Mammary epithelial cell (primary cell): ENCODE measurements at regions of chr5 and their contacts with region 1.

Region 1: GRCh38 chr5:108521841-108522506 is 140.1 kb upstream of the FBXL17 start:
- DNase-seq: peak; percentile 48
- H3K4me3 ChIP-seq: no peak overlapping the region
- H3K27ac ChIP-seq: no peak overlapping the region
- H3K4me1 ChIP-seq: no peaks in the 10 kb centered on the region
- H3K27me3 ChIP-seq: peaks cover 3% of the 10 kb centered on the region
- CTCF ChIP-seq: peak; percentile 73 to 74

Region 2: GRCh38 chr5:108249095-108249784 is 272.7 kb before region 1 on chr5:
- CTCF ChIA-PET with region 1: no interaction called
- dilution Hi-C with region 1: no loop called
- in situ Hi-C with region 1: no loop called
- intact Hi-C with region 1: no loop called
- DNase-seq: no peak
- H3K4me3 ChIP-seq: no peak overlapping the region
- H3K27ac ChIP-seq: no peak overlapping the region
- H3K4me1 ChIP-seq: no peaks in the 10 kb centered on the region
- H3K27me3 ChIP-seq: no peaks in the 10 kb centered on the region
- CTCF ChIP-seq: no peak

Region 3: GRCh38 chr5:108579236-108579635 is 57.3 kb after region 1 on chr5:
- CTCF ChIA-PET with region 1: no interaction called
- dilution Hi-C with region 1: no loop called
- in situ Hi-C with region 1: no loop called
- intact Hi-C with region 1: no loop called
- DNase-seq: no peak
- H3K4me3 ChIP-seq: no peak overlapping the region
- H3K27ac ChIP-seq: no peak overlapping the region
- H3K4me1 ChIP-seq: no peaks in the 10 kb centered on the region
- H3K27me3 ChIP-seq: no peaks in the 10 kb centered on the region
- CTCF ChIP-seq: no peak

Region 4: GRCh38 chr5:108629779-108630528 is 108.0 kb after region 1 on chr5:
- CTCF ChIA-PET with region 1: no interaction called
- dilution Hi-C with region 1: no loop called
- in situ Hi-C with region 1: no loop called
- intact Hi-C with region 1: loop called (anchors 1 kb)
- DNase-seq: no peak
- H3K4me3 ChIP-seq: no peak overlapping the region
- H3K27ac ChIP-seq: no peak overlapping the region
- H3K4me1 ChIP-seq: no peaks in the 10 kb centered on the region
- H3K27me3 ChIP-seq: no peaks in the 10 kb centered on the region
- CTCF ChIP-seq: no peak

Region 5: DNA sequence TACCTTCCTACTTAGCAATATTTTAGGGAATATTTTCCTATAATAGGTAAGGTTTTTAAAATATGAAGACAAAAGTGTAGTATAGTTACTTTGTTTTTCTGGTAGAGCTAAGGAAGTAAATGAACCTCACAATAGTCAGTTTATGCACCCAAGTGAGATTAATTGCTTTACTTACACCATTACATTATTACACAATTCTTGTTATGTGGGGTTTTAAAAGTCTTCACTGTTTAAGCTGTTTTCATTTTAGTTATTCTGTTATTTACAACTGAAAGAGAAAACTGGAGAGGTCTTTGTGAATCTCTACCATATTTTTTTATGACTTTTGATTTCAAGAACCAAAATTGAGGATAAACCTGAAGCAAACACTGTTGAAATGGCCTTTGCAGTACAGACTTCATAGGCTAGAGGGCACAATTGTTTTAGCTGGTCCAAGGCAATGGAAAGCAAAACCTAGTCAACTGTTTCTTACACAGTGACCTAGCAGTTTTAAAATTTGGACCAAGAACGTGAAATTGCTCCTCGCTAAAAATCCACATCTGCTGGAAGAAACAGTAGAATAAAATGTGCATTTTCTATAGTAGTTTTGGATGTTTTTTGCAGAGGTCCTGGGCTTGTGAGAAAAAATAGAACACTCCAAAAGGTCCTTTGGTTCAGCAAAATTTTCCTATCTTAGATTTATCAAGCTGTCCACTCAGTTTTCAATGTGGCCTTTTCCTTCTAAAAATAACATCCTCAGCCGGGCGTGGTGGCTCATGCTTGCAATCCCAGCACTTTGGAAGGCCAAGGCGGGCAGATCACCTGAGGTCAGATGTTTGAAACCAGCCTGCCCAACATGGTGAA is 159.3 kb after region 1 on chr5:
- CTCF ChIA-PET with region 1: no interaction called
- dilution Hi-C with region 1: no loop called
- in situ Hi-C with region 1: no loop called
- intact Hi-C with region 1: loop called (anchors 1 kb)
- DNase-seq: peak; percentile 56
- H3K4me3 ChIP-seq: no peak overlapping the region
- H3K27ac ChIP-seq: no peak overlapping the region
- H3K4me1 ChIP-seq: no peaks in the 10 kb centered on the region
- H3K27me3 ChIP-seq: no peaks in the 10 kb centered on the region
- CTCF ChIP-seq: peak; percentile 72 to 87

Region 6: DNA sequence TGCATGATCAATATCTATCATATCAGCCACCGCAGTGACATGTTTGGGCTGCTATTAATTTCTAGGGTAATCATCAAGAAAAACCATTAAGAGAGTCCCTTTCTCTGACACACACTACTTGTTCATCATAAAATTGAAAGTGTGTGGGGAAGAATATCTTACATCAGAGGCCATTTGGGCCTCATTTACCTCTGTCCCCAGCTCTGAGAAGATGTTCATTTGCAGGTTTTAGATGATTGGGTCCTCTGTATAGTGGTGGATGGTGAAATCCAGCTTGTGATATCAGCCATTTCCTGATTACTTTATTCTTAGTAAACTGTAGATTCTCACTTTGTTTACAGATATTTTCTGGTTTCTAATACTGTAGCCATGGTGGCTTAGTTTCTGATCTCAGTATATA is 917.6 kb after region 1 on chr5:
- CTCF ChIA-PET with region 1: no interaction called
- dilution Hi-C with region 1: no loop called
- in situ Hi-C with region 1: no loop called
- intact Hi-C with region 1: loop called (anchors 10 kb)
- DNase-seq: no peak
- H3K4me3 ChIP-seq: no peak overlapping the region
- H3K27ac ChIP-seq: no peak overlapping the region
- H3K4me1 ChIP-seq: no peaks in the 10 kb centered on the region
- H3K27me3 ChIP-seq: no peaks in the 10 kb centered on the region
- CTCF ChIP-seq: no peak

Region 7: GRCh38 chr5:109468737-109469420 is 946.9 kb after region 1 on chr5:
- CTCF ChIA-PET with region 1: no interaction called
- dilution Hi-C with region 1: no loop called
- in situ Hi-C with region 1: no loop called
- intact Hi-C with region 1: loop called (anchors 5 kb)
- DNase-seq: peak; percentile 73
- H3K4me3 ChIP-seq: no peak overlapping the region
- H3K27ac ChIP-seq: no peak overlapping the region
- H3K4me1 ChIP-seq: peaks cover 6% of the 10 kb centered on the region
- H3K27me3 ChIP-seq: no peaks in the 10 kb centered on the region
- CTCF ChIP-seq: peak; percentile 74 to 85

Region 8: GRCh38 chr5:109479260-109479860 is 957.4 kb after region 1 on chr5:
- CTCF ChIA-PET with region 1: no interaction called
- dilution Hi-C with region 1: no loop called
- in situ Hi-C with region 1: loop called in 1 of 2 experiments (anchors 25 kb)
- intact Hi-C with region 1: loop called (anchors 1 kb)
- DNase-seq: no peak
- H3K4me3 ChIP-seq: no peak overlapping the region
- H3K27ac ChIP-seq: no peak overlapping the region
- H3K4me1 ChIP-seq: no peaks in the 10 kb centered on the region
- H3K27me3 ChIP-seq: no peaks in the 10 kb centered on the region
- CTCF ChIP-seq: peak; percentile 57 to 59